Esophagus muscularis mucosa (tissue), 4 donors: ENCODE measurements at regions of chr3 and their contacts with region 1.

Region 1: DNA sequence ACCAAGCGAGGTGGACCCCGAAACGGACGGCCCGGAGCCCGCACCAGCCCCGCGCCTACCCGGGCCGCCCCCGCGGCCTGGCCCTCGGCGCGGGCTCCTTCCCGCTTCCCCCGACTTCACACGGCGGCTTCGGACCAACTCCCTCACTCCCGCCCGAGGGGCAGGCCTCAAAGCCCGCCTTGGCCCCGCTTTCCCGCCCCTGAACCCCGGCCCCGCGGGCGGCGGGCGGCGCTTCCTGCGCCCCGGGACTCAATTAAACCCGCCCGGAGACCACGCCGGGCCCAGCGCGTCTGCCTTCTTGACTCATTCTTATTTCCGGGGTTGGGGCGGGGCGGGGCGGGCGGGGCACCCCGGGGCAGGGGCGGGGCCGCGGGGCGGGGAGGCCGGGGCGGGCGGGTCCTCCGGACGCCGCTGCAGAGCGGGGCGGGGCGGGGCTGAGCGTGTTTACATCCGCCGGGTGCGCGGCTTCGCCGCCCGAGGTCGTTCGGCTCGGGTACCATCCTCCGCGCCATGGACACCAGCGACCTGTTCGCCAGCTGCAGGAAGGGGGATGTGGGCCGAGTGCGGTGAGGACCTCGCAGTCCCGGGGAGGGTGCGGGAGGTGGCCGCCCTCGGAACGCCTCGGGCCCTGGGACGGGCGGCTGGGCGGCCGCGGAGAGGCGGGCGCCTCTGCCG is at the start of gene ABTB1:
- DNase-seq: peak; percentile 96
- H3K4me3 ChIP-seq: peak within 1 kb of the TSS; percentile 72 to 100 (median 97)
- H3K27ac ChIP-seq: peak within 1 kb of the TSS; percentile 90 to 95 (median 94)
- H3K4me1 ChIP-seq: peaks cover 22 to 47% (median 43%) of the 10 kb centered on the region in 4 donors
- H3K27me3 ChIP-seq: no peaks in the 10 kb centered on the region
- CTCF ChIP-seq: no peak
- EP300 ChIP-seq: no peak
- POLR2A ChIP-seq: peak; percentile 88
- total RNA-seq, gene ABTB1: 21.7 to 44.4 (median 40.6) TPM

Region 2: GRCh38 chr3:127915115-127915936 is 242.7 kb after region 1 on chr3 and contains the start of gene KBTBD12:
- intact Hi-C with region 1: loop called (anchors 10 kb)
- DNase-seq: no peak
- H3K4me3 ChIP-seq: peak within 1 kb of the TSS; percentile 61 to 73 (median 65)
- H3K27ac ChIP-seq: peak within 1 kb of the TSS; percentile 82 to 90 (median 84)
- H3K4me1 ChIP-seq: peaks cover 14 to 55% (median 42%) of the 10 kb centered on the region in 4 donors
- H3K27me3 ChIP-seq: no peaks in the 10 kb centered on the region
- CTCF ChIP-seq: no peak
- EP300 ChIP-seq: no peak
- POLR2A ChIP-seq: peak; percentile 72
- total RNA-seq, gene KBTBD12: 3.8 to 6.0 (median 4.7) TPM

Region 3: DNA sequence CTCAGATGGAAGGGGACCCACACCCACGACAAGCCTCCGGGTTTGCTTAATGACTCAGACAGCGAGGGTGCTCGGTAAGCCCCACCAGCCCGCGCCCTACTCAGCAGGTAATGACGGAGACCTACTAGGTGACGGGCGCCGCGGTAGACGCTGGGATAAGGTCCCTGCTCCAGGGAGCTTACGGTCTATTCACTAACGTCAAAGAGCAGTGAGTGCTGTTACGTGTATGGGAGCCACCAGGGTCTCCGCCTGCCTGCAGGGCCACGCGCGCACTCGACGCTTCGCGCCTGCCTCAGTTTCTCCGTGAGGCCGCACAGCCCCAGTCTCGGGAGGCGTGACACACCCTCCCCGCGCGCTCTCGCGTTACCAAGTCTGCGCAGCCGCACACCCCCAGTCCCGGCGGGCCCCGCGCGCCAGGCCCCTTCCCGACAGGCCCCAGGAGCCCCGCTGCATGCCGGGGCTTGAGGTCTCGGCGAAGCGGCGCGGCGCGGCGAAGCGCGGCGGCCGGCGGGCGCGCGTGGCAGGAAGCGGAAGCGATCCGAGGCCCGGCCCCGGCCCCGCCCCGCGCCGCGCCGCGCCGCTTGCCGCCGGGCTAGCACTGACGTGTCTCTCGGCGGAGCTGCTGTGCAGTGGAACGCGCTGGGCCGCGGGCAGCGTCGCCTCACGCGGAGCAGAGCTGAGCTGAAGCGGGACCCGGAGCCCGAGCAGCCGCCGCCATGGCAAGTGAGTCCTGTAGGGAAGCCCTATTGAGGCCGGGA is 379.4 kb after region 1 on chr3 and contains the start of gene SEC61A1:
- intact Hi-C with region 1: loop called (anchors 10 kb)
- DNase-seq: peak; percentile 96
- H3K4me3 ChIP-seq: peak within 1 kb of the TSS; percentile 95 to 99 (median 98)
- H3K27ac ChIP-seq: peak within 1 kb of the TSS; percentile 93 to 97 (median 96)
- H3K4me1 ChIP-seq: peaks cover 37 to 40% (median 38%) of the 10 kb centered on the region in 4 donors
- H3K27me3 ChIP-seq: no peaks in the 10 kb centered on the region
- CTCF ChIP-seq: peak in 2 of 3 experiments; percentile 8 to 34
- EP300 ChIP-seq: no peak
- POLR2A ChIP-seq: peak; percentile 79
- total RNA-seq, gene SEC61A1: 67.7 to 110 (median 89.6) TPM